CD8-positive, alpha-beta T cell (primary cell): ENCODE measurements at regions of chr2 and their contacts with region 1.

Region 1: DNA sequence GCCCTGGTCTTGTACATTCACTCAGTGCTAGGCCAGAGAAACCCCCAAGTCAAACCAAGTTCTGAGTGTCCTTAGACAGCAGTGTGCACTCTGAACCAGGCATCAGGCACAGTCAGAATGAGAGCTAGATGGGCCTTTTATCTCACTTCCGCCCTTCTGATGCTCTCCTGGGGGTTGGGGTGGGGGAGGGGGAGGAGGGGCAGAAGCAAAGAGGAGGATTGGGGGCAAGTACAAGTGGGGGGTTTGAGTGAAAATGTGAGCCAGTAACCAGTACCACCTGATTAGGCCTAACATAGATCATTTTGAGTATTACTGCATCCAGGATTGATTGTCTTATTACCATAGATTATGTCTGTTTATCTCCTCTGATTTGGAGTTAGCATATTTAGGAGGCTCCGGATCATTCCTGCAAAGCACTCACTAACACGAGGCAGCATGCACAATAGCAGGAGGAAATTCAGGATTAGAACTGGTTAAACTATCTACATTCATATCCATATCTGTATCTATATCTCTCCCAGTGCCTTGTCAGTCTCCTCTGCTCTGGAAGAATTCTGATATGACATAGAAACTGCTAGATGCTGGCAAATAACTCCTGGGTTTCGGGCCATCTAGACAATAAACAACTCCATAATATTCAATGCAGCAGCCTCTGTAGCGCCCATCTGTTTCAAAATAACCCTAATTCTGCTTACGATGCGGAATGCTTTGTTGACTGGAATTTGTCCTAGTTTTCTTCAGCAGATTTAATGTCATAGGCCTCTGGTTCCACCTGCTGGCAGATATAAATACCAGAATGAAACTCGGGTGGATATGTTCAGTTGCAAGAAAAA is 149.1 kb downstream of the RHBDD1 start:
- DNase-seq: peak in 3 of 9 experiments; percentile 14 to 53 (median 33)
- ATAC-seq: peak; percentile 77
- H3K4me3 ChIP-seq: no peak overlapping the region
- H3K4me3 Mint-ChIP-seq: no peak overlapping the region
- H3K27ac ChIP-seq: no peak overlapping the region
- H3K27ac Mint-ChIP-seq: peak overlapping the region; percentile 79
- H3K4me1 ChIP-seq: peaks cover 14% of the 10 kb centered on the region
- H3K4me1 Mint-ChIP-seq: peaks cover 21% of the 10 kb centered on the region
- H3K27me3 ChIP-seq: no peaks in the 10 kb centered on the region
- H3K27me3 Mint-ChIP-seq: no peaks in the 10 kb centered on the region
- CTCF ChIP-seq: peak; percentile 46

Region 2: DNA sequence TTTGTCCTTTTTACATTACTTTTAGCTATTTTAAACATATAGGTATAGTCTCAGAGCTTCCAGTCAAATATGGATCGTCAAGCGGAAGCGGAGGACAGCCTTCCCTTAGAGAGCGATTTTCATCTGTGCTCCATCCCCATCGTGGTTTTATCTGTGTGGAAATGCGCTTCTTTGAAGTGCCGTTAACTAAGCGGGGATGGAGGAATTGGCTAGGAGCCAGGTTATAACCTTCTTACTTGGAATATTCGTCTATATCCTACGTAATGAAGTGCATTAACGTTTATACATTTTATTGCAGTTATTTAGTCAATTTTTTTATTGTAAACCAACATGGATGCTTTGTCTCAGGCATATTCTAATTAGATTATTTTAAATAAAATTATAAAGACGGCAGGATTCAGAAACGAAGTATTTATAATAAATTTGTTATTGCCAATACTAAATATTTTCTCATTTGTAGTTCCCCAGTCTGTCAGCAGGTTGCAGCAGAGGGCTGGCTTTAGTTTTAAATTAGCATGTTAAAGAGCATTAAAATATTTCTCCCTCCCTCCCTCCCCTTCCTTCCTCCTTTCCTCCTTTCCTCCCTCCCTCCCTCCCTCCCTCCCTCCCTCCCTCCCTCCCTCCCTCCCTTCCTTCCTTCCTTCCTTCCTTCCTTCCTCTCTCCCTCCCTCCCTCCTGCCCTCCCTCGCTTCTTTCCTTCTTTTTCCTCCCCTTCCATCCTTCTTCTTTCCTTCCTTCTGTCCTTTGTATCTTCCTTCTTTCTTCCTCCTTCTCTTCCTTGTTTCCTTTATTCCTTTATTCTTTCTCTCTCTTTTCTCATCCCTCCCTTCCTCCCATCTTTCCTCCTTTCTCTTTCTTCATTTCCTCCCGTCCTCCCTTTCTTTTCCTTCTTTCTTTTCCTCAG is 1862.1 kb before region 1 on chr2:
- CTCF ChIA-PET with region 1: no interaction called
- POLR2A ChIA-PET with region 1: no interaction called
- intact Hi-C with region 1: loop called in 1 of 2 experiments (anchors 10 kb)
- DNase-seq: peak in 4 of 9 experiments; percentile 4 to 43 (median 28)
- ATAC-seq: no peak
- H3K4me3 ChIP-seq: no peak overlapping the region
- H3K4me3 Mint-ChIP-seq: no peak overlapping the region
- H3K27ac ChIP-seq: no peak overlapping the region
- H3K27ac Mint-ChIP-seq: no peak overlapping the region
- H3K4me1 ChIP-seq: peaks cover 3% of the 10 kb centered on the region
- H3K4me1 Mint-ChIP-seq: peaks cover 3% of the 10 kb centered on the region
- H3K27me3 ChIP-seq: no peaks in the 10 kb centered on the region
- H3K27me3 Mint-ChIP-seq: no peaks in the 10 kb centered on the region
- CTCF ChIP-seq: peak; percentile 61

Region 3: GRCh38 chr2:225668606-225669266 is 1316.2 kb before region 1 on chr2:
- CTCF ChIA-PET with region 1: interaction called, 11 read pairs
- POLR2A ChIA-PET with region 1: no interaction called
- intact Hi-C with region 1: loop called in 1 of 2 experiments (anchors 1 kb)
- DNase-seq: peak in 3 of 9 experiments; percentile 17 to 67 (median 52)
- ATAC-seq: peak; percentile 68
- H3K4me3 ChIP-seq: no peak overlapping the region
- H3K4me3 Mint-ChIP-seq: no peak overlapping the region
- H3K27ac ChIP-seq: no peak overlapping the region
- H3K27ac Mint-ChIP-seq: no peak overlapping the region
- H3K4me1 ChIP-seq: no peaks in the 10 kb centered on the region
- H3K4me1 Mint-ChIP-seq: no peaks in the 10 kb centered on the region
- H3K27me3 ChIP-seq: no peaks in the 10 kb centered on the region
- H3K27me3 Mint-ChIP-seq: peaks cover 7% of the 10 kb centered on the region
- CTCF ChIP-seq: peak; percentile 74

Region 4: DNA sequence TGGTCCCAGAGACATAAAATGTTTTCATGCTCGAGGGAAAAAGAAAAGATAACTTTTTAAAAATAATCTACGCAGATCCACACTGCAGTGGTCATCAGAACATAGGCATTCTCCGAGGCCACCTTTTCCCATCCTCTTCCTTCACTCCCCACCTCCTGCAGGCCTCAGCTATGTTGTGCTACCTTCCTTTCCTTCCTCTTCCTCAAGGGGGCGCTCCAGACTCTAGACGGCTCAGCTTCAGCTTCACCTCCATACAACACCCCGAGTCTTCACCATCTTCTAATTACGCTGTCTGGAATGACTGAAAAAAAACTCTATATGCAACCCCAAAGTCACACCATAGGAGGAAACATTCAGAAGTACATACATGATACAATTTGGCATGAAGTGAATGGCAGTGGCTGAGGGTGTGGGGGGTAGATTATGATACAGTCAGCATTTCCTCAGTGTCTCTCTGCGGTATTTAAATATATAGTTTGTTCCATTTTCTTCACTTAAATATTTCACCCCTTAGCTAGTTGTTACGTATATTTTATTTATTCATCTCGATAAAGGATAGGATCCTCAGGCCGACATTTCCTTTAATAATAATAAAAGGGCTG is 769.0 kb before region 1 on chr2:
- CTCF ChIA-PET with region 1: interaction called, 3 read pairs
- POLR2A ChIA-PET with region 1: no interaction called
- intact Hi-C with region 1: loop called (anchors 1 to 5 kb)
- DNase-seq: peak; percentile 22 to 62 (median 47)
- ATAC-seq: peak; percentile 62
- H3K4me3 ChIP-seq: no peak overlapping the region
- H3K4me3 Mint-ChIP-seq: no peak overlapping the region
- H3K27ac ChIP-seq: no peak overlapping the region
- H3K27ac Mint-ChIP-seq: no peak overlapping the region
- H3K4me1 ChIP-seq: no peaks in the 10 kb centered on the region
- H3K4me1 Mint-ChIP-seq: no peaks in the 10 kb centered on the region
- H3K27me3 ChIP-seq: no peaks in the 10 kb centered on the region
- H3K27me3 Mint-ChIP-seq: peaks cover 3% of the 10 kb centered on the region
- CTCF ChIP-seq: peak; percentile 53

Region 5: GRCh38 chr2:226835796-226836547 is 149.0 kb before region 1 on chr2 and contains the start of gene RHBDD1:
- CTCF ChIA-PET with region 1: no interaction called
- POLR2A ChIA-PET with region 1: interaction called, 3 read pairs
- intact Hi-C with region 1: loop called in 1 of 2 experiments (anchors 1 kb)
- DNase-seq: peak; percentile 88 to 98 (median 94)
- ATAC-seq: peak; percentile 82
- H3K4me3 ChIP-seq: peak within 1 kb of the TSS; percentile 64 to 74
- H3K4me3 Mint-ChIP-seq: peak within 1 kb of the TSS; percentile 90
- H3K27ac ChIP-seq: peak within 1 kb of the TSS; percentile 94 to 97
- H3K27ac Mint-ChIP-seq: peak within 1 kb of the TSS; percentile 98
- H3K4me1 ChIP-seq: peaks cover 51% of the 10 kb centered on the region
- H3K4me1 Mint-ChIP-seq: peaks cover 61% of the 10 kb centered on the region
- H3K27me3 ChIP-seq: no peaks in the 10 kb centered on the region
- H3K27me3 Mint-ChIP-seq: no peaks in the 10 kb centered on the region
- CTCF ChIP-seq: no peak
- total RNA-seq, gene RHBDD1: 29.7 to 30.9 TPM

Region 6: GRCh38 chr2:227132986-227133385 is 148.0 kb after region 1 on chr2:
- CTCF ChIA-PET with region 1: no interaction called
- POLR2A ChIA-PET with region 1: no interaction called
- intact Hi-C with region 1: no loop called
- DNase-seq: no peak
- ATAC-seq: no peak
- H3K4me3 ChIP-seq: no peak overlapping the region
- H3K4me3 Mint-ChIP-seq: no peak overlapping the region
- H3K27ac ChIP-seq: no peak overlapping the region
- H3K27ac Mint-ChIP-seq: no peak overlapping the region
- H3K4me1 ChIP-seq: no peaks in the 10 kb centered on the region
- H3K4me1 Mint-ChIP-seq: no peaks in the 10 kb centered on the region
- H3K27me3 ChIP-seq: no peaks in the 10 kb centered on the region
- H3K27me3 Mint-ChIP-seq: peaks cover 17% of the 10 kb centered on the region
- CTCF ChIP-seq: no peak